H1 (cell line): ENCODE measurements at regions of chr15 and their contacts with region 1.

Region 1: DNA sequence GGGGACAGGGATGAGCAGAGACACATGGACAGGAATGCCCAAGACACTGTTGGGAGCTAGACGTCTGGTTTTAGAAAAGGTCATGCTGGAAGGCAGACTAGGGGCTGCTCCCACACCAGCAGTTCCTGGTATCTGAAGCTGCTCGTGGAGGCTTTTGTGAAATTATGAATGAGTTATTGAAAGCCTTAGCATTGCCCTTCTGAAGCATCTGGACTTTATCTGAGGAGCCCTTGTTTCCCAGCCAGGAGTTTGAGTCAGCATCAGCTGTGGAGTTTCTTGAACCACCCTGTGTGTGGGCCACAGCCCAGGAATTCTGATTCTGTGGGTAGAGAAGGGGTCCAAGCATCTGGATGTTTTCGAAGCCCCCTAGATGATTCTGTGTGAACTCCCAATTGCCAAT is 258.7 kb downstream of the SLCO3A1 start:
- DNase-seq: no peak
- H3K4me3 ChIP-seq: no peak overlapping the region
- H3K27ac ChIP-seq: no peak overlapping the region
- H3K4me1 ChIP-seq: peaks cover 7 to 19% (median 14%) of the 10 kb centered on the region in 4 experiments; a peak in 6 of 7 replicates
- H3K27me3 ChIP-seq: no peaks in the 10 kb centered on the region
- CTCF ChIP-seq: no peak
- EP300 ChIP-seq: no peak
- POLR2A ChIP-seq: no peak
- RAD21 ChIP-seq: no peak

Region 2: DNA sequence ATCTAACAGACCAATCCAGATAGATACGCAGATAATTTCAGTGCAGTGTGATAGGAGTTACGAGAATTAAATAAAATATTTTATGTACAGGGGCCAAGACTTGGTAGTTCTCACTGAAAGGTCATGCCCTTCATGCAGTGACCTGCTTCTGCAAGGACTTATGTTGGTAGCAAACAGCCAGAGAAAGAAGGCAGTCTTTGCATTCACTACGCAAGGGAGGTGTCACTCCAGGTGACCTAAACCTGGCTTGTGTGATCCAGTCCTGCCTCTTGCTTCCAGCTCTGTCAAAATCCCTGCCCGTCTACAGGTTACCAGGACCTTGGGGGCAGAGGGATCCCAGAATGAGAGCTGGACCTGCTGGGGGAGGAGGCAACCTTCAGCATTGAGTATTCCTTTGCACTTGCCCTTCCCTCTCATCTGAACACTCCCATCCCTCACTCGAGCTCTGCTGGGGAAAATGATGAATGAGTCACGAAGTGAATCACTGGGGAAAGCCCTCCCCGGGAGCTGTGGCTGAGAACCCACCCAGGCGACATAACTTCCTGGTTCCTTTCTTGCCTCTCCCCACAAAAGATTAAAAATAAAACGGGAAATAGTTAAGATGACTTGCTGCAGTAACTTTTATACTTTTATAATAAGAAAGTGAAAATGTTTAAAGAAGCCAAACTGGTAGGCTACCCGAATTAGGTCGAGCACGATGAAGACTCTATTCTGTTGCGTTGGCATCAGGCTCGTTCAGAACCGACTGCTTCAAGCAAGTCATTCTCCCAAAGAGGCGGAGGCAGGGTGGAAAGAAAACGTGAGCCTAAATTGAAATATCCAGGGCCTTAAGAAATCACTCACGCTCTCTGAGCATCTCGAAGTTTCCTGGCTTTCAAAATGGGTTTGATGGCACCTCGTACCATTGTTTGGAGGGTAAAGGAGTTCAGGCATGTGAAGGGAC is 42.6 kb before region 1 on chr15:
- CTCF ChIA-PET with region 1: no interaction called
- POLR2A ChIA-PET with region 1: no interaction called
- DNase-seq: no peak
- H3K4me3 ChIP-seq: no peak overlapping the region
- H3K27ac ChIP-seq: no peak overlapping the region
- H3K4me1 ChIP-seq: peaks cover 0 to 2% (median 0%) of the 10 kb centered on the region in 4 experiments; a peak in 4 of 7 replicates
- H3K27me3 ChIP-seq: no peaks in the 10 kb centered on the region
- CTCF ChIP-seq: no peak
- EP300 ChIP-seq: no peak
- POLR2A ChIP-seq: no peak
- RAD21 ChIP-seq: no peak

Region 3: DNA sequence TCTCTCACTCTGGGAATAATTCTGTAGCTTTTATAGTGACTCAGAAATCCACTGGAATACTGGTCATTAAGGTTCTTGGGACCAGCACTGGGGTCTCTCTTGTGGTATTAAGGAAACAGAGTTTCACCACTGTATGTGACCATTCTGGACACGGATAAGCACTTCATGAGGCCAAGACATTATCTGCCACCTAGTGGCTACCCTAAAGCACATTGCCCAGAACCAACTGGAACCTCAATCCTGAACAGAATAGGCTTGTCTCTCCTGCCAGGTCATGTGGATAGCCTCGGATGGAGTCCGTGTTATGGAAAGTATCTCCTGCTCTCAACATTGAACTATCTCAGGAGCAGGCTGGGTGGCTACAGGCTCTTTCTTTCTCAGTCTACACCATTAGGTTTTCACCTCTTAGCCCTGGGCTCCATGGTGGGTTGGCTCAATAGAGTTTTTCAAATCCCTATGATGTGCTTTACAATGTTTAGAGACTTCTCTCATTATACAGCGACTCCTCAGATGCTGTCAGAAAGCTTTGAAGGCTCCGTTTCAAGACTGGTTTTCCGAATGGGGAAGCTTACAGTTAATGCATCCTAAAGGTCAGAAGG is 113.9 kb after region 1 on chr15:
- CTCF ChIA-PET with region 1: interaction called, 13 read pairs
- POLR2A ChIA-PET with region 1: no interaction called
- DNase-seq: no peak
- H3K4me3 ChIP-seq: no peak overlapping the region
- H3K27ac ChIP-seq: no peak overlapping the region
- H3K4me1 ChIP-seq: no peaks in the 10 kb centered on the region
- H3K27me3 ChIP-seq: no peaks in the 10 kb centered on the region
- CTCF ChIP-seq: peak; percentile 12 to 84 (median 74)
- EP300 ChIP-seq: no peak
- POLR2A ChIP-seq: no peak
- RAD21 ChIP-seq: peak; percentile 77 to 88